Left ventricle myocardium superior (tissue), 1 donor: ENCODE measurements at regions of chr2 and their contacts with region 1.

Region 1: GRCh38 chr2:16281451-16282336 is 341.3 kb downstream of the MYCN start:
- DNase-seq: no peak
- ATAC-seq: peak; percentile 69

Region 2: DNA sequence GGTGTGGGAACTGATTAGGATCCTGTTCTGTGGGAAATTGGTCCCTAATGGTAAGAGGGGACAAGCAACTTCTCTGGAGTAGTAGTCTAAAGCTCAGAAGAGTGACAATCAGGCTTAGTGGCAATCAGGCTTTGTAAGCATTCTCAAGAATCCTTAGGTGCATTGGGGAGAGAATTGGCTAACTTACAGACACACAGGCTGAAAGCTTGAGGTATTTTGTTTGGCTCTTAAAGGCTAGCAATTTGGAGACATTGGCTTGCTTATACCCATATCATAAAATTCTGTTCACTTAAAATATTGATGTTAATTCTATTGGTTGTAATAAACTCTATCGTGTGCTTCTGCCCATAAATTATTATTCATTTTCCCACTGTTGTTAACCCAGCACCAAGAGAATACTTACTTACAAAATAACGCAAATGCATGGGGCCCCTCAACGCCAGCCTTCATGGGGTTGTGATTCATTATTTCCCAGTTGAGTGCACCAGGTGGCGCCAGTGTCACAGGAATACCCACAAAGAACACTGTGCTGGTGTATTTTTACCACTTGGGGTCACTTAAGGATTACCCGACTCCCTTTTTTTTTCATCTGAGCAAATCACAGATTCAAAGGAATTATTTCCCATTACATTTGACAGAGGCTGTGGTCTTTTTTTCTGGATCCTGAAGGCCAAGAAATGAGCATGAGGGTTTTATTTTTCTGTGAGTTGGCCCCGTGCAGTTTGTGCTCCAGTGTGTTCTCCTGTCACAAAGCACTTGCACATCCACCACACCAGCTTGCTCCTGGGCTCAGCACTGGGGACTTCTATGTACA is 644.5 kb before region 1 on chr2:
- intact Hi-C with region 1: loop called (anchors 10 kb)
- DNase-seq: peak; percentile 78
- ATAC-seq: peak; percentile 87

Region 3: DNA sequence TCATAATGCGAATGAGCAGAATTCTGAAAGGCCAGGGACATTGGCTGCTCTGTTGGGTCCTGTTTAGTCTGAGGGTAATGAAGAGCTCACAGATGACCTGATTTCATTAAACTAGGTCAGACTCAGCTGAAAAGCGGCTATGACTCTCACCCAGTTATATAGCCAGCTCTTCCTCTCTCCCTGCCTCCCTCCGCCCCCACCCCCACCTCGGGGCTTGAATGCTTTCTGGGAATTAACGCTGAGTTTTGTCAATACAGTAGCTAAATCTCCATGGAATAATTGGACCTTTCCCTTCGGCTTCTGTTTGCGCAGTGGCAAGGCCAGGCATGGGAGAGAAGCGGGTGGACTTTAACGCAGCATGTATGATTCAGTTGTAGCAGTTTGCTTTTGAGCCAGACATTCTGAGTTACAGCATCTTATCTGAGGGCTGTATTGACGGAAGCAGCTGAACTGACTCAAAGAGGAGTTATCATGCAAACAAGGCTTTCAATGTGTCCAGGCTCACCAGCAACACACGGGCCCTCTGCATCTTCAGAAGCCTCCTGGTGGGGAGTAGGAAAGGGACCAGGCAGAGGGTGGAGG is 230.7 kb before region 1 on chr2:
- intact Hi-C with region 1: no loop called
- DNase-seq: no peak
- ATAC-seq: peak; percentile 28